HCT116 (cell line): ENCODE measurements at regions of chr6 and their contacts with region 1.

Region 1: GRCh38 chr6:104525677-104526312 is 333.9 kb downstream of the HACE1 start:
- DNase-seq: peak; percentile 62
- ATAC-seq: peak; percentile 98
- H3K4me3 ChIP-seq: no peak overlapping the region
- H3K27ac ChIP-seq: no peak overlapping the region
- H3K4me1 ChIP-seq: no peaks in the 10 kb centered on the region
- H3K27me3 ChIP-seq: no peaks in the 10 kb centered on the region
- CTCF ChIP-seq: peak; percentile 65 to 96 (median 81)
- POLR2A ChIP-seq: no peak
- RAD21 ChIP-seq: peak; percentile 95

Region 2: DNA sequence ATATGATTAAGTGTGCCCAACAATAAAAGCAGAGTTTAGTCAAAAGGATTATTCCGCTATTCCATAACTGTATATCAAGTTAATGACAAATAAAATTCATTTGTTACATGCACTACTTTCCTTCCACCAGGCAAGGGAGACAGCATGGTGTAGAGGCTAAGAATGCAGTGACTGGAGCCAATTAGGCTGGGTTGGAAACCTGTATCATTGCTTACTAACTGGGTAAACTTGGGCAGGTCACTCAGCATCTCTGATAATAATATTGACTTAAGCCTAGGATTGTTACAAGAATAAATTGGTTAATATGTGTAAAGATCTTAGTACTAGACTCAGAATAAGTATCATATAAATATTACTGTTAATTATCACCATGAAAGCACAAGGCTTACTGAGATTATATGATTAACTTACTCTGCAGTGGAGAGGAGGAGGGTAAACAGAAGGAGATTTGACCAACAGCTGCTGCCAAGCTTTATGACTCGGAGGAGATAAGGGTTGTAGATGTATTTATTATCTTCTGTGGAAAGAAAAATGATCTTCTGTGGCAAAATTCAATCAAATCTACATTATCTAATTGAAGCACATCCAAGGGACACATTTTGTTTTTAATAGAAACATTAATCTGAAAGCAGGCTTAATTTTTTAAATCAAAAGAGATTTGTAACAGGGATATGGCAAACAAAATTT is 1672.4 kb before region 1 on chr6:
- CTCF ChIA-PET with region 1: interaction called, 3 read pairs
- POLR2A ChIA-PET with region 1: no interaction called
- RAD21 ChIA-PET with region 1: no interaction called
- intact Hi-C with region 1: loop called (anchors 10 kb)
- DNase-seq: no peak
- ATAC-seq: no peak
- H3K4me3 ChIP-seq: no peak overlapping the region
- H3K27ac ChIP-seq: no peak overlapping the region
- H3K4me1 ChIP-seq: peaks cover 0 to 4% of the 10 kb centered on the region in 2 experiments; a peak in 2 of 4 replicates
- H3K27me3 ChIP-seq: no peaks in the 10 kb centered on the region
- CTCF ChIP-seq: no peak
- POLR2A ChIP-seq: no peak
- RAD21 ChIP-seq: no peak

Region 3: GRCh38 chr6:103617642-103618041 is 908.2 kb before region 1 on chr6:
- CTCF ChIA-PET with region 1: no interaction called
- POLR2A ChIA-PET with region 1: no interaction called
- RAD21 ChIA-PET with region 1: no interaction called
- intact Hi-C with region 1: no loop called
- DNase-seq: no peak
- ATAC-seq: no peak
- H3K4me3 ChIP-seq: no peak overlapping the region
- H3K27ac ChIP-seq: no peak overlapping the region
- H3K4me1 ChIP-seq: no peaks in the 10 kb centered on the region
- H3K27me3 ChIP-seq: no peaks in the 10 kb centered on the region
- CTCF ChIP-seq: no peak
- POLR2A ChIP-seq: no peak
- RAD21 ChIP-seq: no peak

Region 4: GRCh38 chr6:104003803-104004516 is 521.8 kb before region 1 on chr6:
- CTCF ChIA-PET with region 1: interaction called, 3 read pairs
- POLR2A ChIA-PET with region 1: no interaction called
- RAD21 ChIA-PET with region 1: no interaction called
- intact Hi-C with region 1: loop called (anchors 1 kb)
- DNase-seq: no peak
- ATAC-seq: peak; percentile 54; the same call in 1 of the 2 replicates
- H3K4me3 ChIP-seq: no peak overlapping the region
- H3K27ac ChIP-seq: no peak overlapping the region
- H3K4me1 ChIP-seq: no peaks in the 10 kb centered on the region
- H3K27me3 ChIP-seq: no peaks in the 10 kb centered on the region
- CTCF ChIP-seq: peak; percentile 13 to 54 (median 28); a peak in 3 of 6 replicates
- POLR2A ChIP-seq: no peak
- RAD21 ChIP-seq: no peak

Region 5: GRCh38 chr6:104325341-104326172 is 200.2 kb before region 1 on chr6:
- CTCF ChIA-PET with region 1: no interaction called
- POLR2A ChIA-PET with region 1: no interaction called
- RAD21 ChIA-PET with region 1: no interaction called
- intact Hi-C with region 1: loop called (anchors 10 kb)
- DNase-seq: peak; percentile 22
- ATAC-seq: peak; percentile 55
- H3K4me3 ChIP-seq: no peak overlapping the region
- H3K27ac ChIP-seq: no peak overlapping the region
- H3K4me1 ChIP-seq: no peaks in the 10 kb centered on the region
- H3K27me3 ChIP-seq: no peaks in the 10 kb centered on the region
- CTCF ChIP-seq: peak; percentile 39 to 70 (median 66); a peak in 5 of 6 replicates
- POLR2A ChIP-seq: no peak
- RAD21 ChIP-seq: peak; percentile 56

Region 6: DNA sequence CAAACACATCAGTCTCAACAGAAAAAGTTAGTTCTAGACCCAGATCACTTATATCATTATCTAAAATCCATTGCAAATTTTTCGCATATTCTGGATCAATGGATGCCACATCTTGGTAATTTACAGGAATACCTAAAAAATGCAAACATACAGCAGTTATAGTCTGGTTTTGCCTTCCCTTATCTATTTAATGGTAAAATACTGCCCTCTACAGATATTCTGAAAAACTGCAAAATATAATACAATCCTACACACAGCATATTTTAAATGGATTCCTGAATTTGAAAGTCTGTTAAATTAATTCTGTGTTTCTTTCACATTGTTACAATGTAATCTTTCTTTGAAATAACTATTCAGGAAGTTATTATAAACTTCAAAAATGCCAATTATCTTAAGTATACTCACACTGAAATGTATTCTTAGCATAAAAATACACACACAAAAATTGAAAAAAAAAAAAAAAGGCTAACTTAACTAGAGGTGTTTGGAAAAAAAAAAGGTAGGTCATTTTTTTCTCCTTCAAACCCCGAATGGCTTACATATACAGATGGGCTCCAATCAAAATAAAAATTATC is 245.6 kb after region 1 on chr6:
- CTCF ChIA-PET with region 1: no interaction called
- POLR2A ChIA-PET with region 1: no interaction called
- RAD21 ChIA-PET with region 1: no interaction called
- intact Hi-C with region 1: loop called (anchors 2 kb)
- DNase-seq: no peak
- ATAC-seq: peak; percentile 79
- H3K4me3 ChIP-seq: no peak overlapping the region
- H3K27ac ChIP-seq: no peak overlapping the region
- H3K4me1 ChIP-seq: no peaks in the 10 kb centered on the region
- H3K27me3 ChIP-seq: no peaks in the 10 kb centered on the region
- CTCF ChIP-seq: peak; percentile 28 to 74 (median 39); a peak in 5 of 6 replicates
- POLR2A ChIP-seq: no peak
- RAD21 ChIP-seq: peak; percentile 58

Region 7: DNA sequence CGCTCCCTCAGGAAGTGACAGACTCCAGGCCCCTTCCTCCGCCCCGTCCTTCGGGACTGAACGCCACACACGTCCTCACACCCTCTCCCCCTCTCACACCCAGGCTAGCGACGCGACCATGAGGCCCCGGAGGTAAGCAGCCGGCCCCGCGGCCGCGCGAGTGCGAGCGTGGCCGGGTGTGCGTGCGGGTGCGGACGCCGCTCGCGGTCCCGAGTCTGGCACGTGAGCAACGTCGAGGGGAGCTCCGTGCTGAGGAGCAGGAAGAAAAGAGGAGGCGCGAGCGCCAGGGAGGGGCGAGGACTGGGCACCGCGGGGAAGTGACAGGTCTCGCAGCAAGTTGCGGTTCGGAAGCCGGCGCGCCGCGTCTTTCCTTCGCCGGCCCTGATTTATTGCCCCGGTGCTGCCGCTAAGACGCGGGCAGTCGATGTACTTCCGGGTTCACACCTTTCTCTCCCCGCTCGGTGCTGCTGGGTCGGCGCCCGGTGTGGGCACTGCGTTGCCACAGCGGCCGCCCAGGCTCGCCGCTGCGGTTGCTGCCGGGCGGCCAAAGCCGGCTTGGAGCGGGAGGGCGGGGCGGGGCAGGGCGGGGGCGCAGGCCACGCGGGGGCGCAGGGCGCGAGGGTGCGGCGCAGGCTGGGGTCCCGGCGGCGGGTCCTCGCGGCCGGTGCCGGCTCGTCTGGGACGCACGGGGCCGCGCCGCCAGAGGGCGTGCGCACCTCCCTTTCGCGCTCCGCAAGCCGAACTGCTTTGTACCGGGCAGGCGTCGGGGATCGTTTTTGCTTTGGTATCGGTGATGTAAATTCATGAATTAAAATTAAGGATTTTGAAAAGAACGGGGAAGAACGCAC is 415.3 kb after region 1 on chr6:
- CTCF ChIA-PET with region 1: no interaction called
- POLR2A ChIA-PET with region 1: no interaction called
- RAD21 ChIA-PET with region 1: no interaction called
- intact Hi-C with region 1: no loop called
- DNase-seq: no peak
- ATAC-seq: no peak
- H3K4me3 ChIP-seq: no peak overlapping the region
- H3K27ac ChIP-seq: no peak overlapping the region
- H3K4me1 ChIP-seq: no peaks in the 10 kb centered on the region
- H3K27me3 ChIP-seq: no peaks in the 10 kb centered on the region
- CTCF ChIP-seq: no peak
- POLR2A ChIP-seq: no peak
- RAD21 ChIP-seq: no peak